ENCODE measurements at regions of chr12 and their contacts with region 1.

Region 1: GRCh38 chr12:118061011-118061875 is at the start of gene WSB2:
- DNase-seq: peak; percentile 63
- ATAC-seq: peak; percentile 31
- H3K4me3 Mint-ChIP-seq: peak within 1 kb of the TSS; percentile 85
- H3K27ac Mint-ChIP-seq: peak within 1 kb of the TSS; percentile 96
- H3K4me1 Mint-ChIP-seq: peaks cover 49% of the 10 kb centered on the region
- H3K27me3 Mint-ChIP-seq: no peaks in the 10 kb centered on the region
- CTCF ChIP-seq: no peak
- total RNA-seq, gene WSB2: 26.2 to 27.9 TPM

Region 2: GRCh38 chr12:117907212-117907611 is 154.0 kb before region 1 on chr12:
- CTCF ChIA-PET with region 1: no interaction called
- POLR2A ChIA-PET with region 1: no interaction called
- intact Hi-C with region 1: no loop called
- DNase-seq: no peak
- ATAC-seq: no peak
- H3K4me3 Mint-ChIP-seq: no peak overlapping the region
- H3K27ac Mint-ChIP-seq: no peak overlapping the region
- H3K4me1 Mint-ChIP-seq: no peaks in the 10 kb centered on the region
- H3K27me3 Mint-ChIP-seq: no peaks in the 10 kb centered on the region
- CTCF ChIP-seq: no peak

Region 3: GRCh38 chr12:118035246-118036041 is 25.8 kb before region 1 on chr12:
- CTCF ChIA-PET with region 1: interaction called, 10 read pairs
- POLR2A ChIA-PET with region 1: interaction called, 16 read pairs
- intact Hi-C with region 1: no loop called
- DNase-seq: peak; percentile 47
- ATAC-seq: peak; percentile 83
- H3K4me3 Mint-ChIP-seq: no peak overlapping the region
- H3K27ac Mint-ChIP-seq: peak overlapping the region; percentile 91
- H3K4me1 Mint-ChIP-seq: peaks cover 49% of the 10 kb centered on the region
- H3K27me3 Mint-ChIP-seq: no peaks in the 10 kb centered on the region
- CTCF ChIP-seq: no peak

Region 4: DNA sequence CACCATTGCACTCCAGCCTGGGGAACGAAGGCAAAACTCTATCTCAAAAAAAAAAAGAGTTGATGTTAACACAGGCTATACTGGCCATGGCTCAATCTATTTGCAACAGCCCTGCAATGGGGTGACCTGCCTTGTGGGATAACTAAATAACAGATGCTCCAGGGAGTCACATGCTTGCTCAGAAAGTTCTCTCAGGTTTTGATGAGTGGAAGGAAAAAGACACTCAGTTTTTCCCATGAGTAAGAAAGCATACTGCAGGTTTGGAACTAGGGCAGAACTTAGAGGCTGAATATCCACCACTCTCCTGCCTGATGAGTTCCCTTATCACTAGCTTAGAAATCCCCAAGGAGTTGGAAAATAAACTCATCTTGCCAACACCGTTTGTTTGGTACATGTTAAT is 17.2 kb before region 1 on chr12:
- CTCF ChIA-PET with region 1: interaction called, 21 read pairs
- POLR2A ChIA-PET with region 1: interaction called, 15 read pairs
- intact Hi-C with region 1: no loop called
- DNase-seq: no peak
- ATAC-seq: peak; percentile 20
- H3K4me3 Mint-ChIP-seq: no peak overlapping the region
- H3K27ac Mint-ChIP-seq: peak overlapping the region; percentile 82
- H3K4me1 Mint-ChIP-seq: peaks cover 37% of the 10 kb centered on the region
- H3K27me3 Mint-ChIP-seq: no peaks in the 10 kb centered on the region
- CTCF ChIP-seq: no peak

Region 5: GRCh38 chr12:118120579-118121363 is 59.5 kb after region 1 on chr12:
- CTCF ChIA-PET with region 1: interaction called, 11 read pairs
- POLR2A ChIA-PET with region 1: interaction called, 4 read pairs
- intact Hi-C with region 1: no loop called
- DNase-seq: peak; percentile 79
- ATAC-seq: peak; percentile 66
- H3K4me3 Mint-ChIP-seq: no peak overlapping the region
- H3K27ac Mint-ChIP-seq: peak overlapping the region; percentile 79
- H3K4me1 Mint-ChIP-seq: peaks cover 8% of the 10 kb centered on the region
- H3K27me3 Mint-ChIP-seq: no peaks in the 10 kb centered on the region
- CTCF ChIP-seq: peak; percentile 93

Region 6: DNA sequence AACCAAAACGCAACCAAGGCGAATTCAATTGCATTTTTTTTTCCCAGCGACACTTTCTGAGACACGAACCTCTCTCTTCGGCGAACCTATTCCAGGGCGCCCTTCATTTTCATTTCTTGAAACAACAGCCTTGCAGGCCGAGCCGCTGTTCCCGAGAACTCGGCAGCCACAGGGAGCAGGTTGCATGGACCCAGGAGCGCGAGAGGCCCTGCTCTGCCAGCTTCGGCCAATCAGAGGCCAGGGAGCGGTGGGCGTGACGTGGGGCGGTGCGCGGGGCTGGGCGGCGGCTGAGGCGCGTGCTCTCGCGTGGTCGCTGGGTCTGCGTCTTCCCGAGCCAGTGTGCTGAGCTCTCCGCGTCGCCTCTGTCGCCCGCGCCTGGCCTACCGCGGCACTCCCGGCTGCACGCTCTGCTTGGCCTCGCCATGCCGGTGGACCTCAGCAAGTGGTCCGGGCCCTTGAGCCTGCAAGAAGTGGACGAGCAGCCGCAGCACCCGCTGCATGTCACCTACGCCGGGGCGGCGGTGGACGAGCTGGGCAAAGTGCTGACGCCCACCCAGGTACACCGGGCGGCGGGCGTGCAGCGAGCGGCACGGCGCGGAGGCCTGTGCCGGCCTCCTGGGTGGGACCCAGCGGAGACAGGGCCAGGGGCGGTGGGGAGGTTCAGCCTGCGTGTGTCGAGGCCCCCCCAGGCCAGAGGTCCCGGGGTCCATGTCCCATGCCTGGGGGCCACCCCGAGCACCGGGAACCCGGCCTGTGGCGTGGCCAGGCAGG is 74.7 kb after region 1 on chr12 and contains the start of gene PEBP1:
- CTCF ChIA-PET with region 1: interaction called, 5 read pairs
- POLR2A ChIA-PET with region 1: interaction called, 16 read pairs
- intact Hi-C with region 1: no loop called
- DNase-seq: peak; percentile 95
- ATAC-seq: peak; percentile 99
- H3K4me3 Mint-ChIP-seq: peak within 1 kb of the TSS; percentile 93
- H3K27ac Mint-ChIP-seq: peak within 1 kb of the TSS; percentile 91
- H3K4me1 Mint-ChIP-seq: peaks cover 31% of the 10 kb centered on the region
- H3K27me3 Mint-ChIP-seq: no peaks in the 10 kb centered on the region
- CTCF ChIP-seq: no peak
- total RNA-seq, gene PEBP1: 122 to 128 TPM

Measured in activated CD8-positive, alpha-beta T cell treated with anti-CD3 and anti-CD28 coated beads for 36 hours (primary cell).